B cell (primary cell): ENCODE measurements at regions of chr17 and their contacts with region 1.

Region 1: GRCh38 chr17:8057691-8058114 is 18.8 kb downstream of the ALOX15B start:
- DNase-seq: peak; percentile 87
- ATAC-seq: peak; percentile 85
- H3K4me3 ChIP-seq: no peak overlapping the region
- H3K4me3 Mint-ChIP-seq: no peak overlapping the region
- H3K27ac ChIP-seq: no peak overlapping the region
- H3K27ac Mint-ChIP-seq: no peak overlapping the region
- H3K4me1 ChIP-seq: peaks cover 22 to 25% of the 10 kb centered on the region in 2 donors
- H3K4me1 Mint-ChIP-seq: peaks cover 29% of the 10 kb centered on the region
- H3K27me3 ChIP-seq: peaks cover 0 to 24% (median 9%) of the 10 kb centered on the region in 4 experiments
- H3K27me3 Mint-ChIP-seq: peaks cover 31% of the 10 kb centered on the region
- CTCF ChIP-seq: peak; percentile 86

Region 2: GRCh38 chr17:7745748-7746470 is 311.8 kb before region 1 on chr17:
- CTCF ChIA-PET with region 1: interaction called, 32 read pairs
- POLR2A ChIA-PET with region 1: no interaction called
- intact Hi-C with region 1: loop called (anchors 1 kb)
- DNase-seq: no peak
- ATAC-seq: no peak
- H3K4me3 ChIP-seq: no peak overlapping the region
- H3K4me3 Mint-ChIP-seq: no peak overlapping the region
- H3K27ac ChIP-seq: no peak overlapping the region
- H3K27ac Mint-ChIP-seq: no peak overlapping the region
- H3K4me1 ChIP-seq: no peaks in the 10 kb centered on the region
- H3K4me1 Mint-ChIP-seq: no peaks in the 10 kb centered on the region
- H3K27me3 ChIP-seq: no peaks in the 10 kb centered on the region
- H3K27me3 Mint-ChIP-seq: peaks cover 25% of the 10 kb centered on the region
- CTCF ChIP-seq: no peak

Region 3: DNA sequence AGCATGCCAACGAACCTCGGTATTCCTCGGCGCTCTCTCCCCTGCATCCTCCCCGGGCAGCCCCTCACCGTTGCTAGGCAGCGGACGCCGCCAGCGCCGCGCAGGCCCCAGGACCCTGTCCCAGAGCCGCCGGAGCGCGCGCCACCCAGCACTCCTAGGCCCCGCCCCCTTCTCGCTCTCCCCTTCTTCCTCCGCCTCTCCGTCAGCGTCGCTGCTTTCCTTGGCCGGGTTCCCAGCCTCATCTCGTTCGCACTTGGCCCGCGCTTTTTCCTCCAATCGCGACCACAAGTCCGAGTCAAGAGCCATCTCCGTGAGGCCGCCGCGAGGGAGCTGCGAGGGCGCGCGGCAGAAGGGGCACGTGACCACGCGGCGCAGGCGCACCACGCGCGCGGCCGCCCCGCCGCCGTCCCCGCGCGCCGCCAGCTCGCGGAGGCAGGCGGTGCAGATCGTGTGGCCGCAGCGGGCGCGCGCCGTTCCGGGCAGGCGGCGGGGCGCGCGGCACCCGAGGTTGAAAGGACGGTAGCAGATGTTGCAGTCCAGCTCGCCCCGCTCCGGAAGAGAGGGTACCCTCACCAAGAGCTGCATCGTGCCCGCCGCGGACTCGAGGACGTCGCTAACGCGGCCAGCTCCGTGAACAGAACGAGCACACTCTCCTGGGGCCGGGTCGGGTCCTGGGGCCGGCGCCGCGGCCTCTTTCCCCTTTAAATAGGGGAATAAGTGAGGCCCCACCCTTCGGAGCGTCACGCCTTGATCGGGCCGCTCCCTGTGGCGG is 141.9 kb before region 1 on chr17 and contains the start of gene RNF227:
- CTCF ChIA-PET with region 1: interaction called, 75 read pairs
- POLR2A ChIA-PET with region 1: no interaction called
- intact Hi-C with region 1: loop called (anchors 1 kb)
- DNase-seq: peak; percentile 93
- ATAC-seq: peak; percentile 82
- H3K4me3 ChIP-seq: peak within 1 kb of the TSS; percentile 9 to 81 (median 76)
- H3K4me3 Mint-ChIP-seq: peak within 1 kb of the TSS; percentile 93
- H3K27ac ChIP-seq: peak within 1 kb of the TSS; percentile 69 to 75
- H3K27ac Mint-ChIP-seq: peak within 1 kb of the TSS; percentile 93
- H3K4me1 ChIP-seq: peaks cover 16 to 20% of the 10 kb centered on the region in 2 donors
- H3K4me1 Mint-ChIP-seq: peaks cover 24% of the 10 kb centered on the region
- H3K27me3 ChIP-seq: no peaks in the 10 kb centered on the region
- H3K27me3 Mint-ChIP-seq: no peaks in the 10 kb centered on the region
- CTCF ChIP-seq: no peak
- total RNA-seq, gene RNF227: 3.8 and 4.3 TPM in 2 replicates

Region 4: GRCh38 chr17:8041249-8041928 is 16.3 kb before region 1 on chr17:
- CTCF ChIA-PET with region 1: interaction called, 26 read pairs
- POLR2A ChIA-PET with region 1: no interaction called
- intact Hi-C with region 1: loop called (anchors 1 kb)
- DNase-seq: peak; percentile 64
- ATAC-seq: no peak
- H3K4me3 ChIP-seq: no peak overlapping the region
- H3K4me3 Mint-ChIP-seq: no peak overlapping the region
- H3K27ac ChIP-seq: no peak overlapping the region
- H3K27ac Mint-ChIP-seq: no peak overlapping the region
- H3K4me1 ChIP-seq: peaks cover 5 to 8% of the 10 kb centered on the region in 2 donors
- H3K4me1 Mint-ChIP-seq: peaks cover 3% of the 10 kb centered on the region
- H3K27me3 ChIP-seq: peaks cover 0 to 14% (median 7%) of the 10 kb centered on the region in 4 experiments
- H3K27me3 Mint-ChIP-seq: peaks cover 42% of the 10 kb centered on the region
- CTCF ChIP-seq: peak; percentile 56

Region 5: GRCh38 chr17:8118769-8119580 is 61.3 kb after region 1 on chr17:
- CTCF ChIA-PET with region 1: interaction called, 40 read pairs
- POLR2A ChIA-PET with region 1: no interaction called
- intact Hi-C with region 1: no loop called
- DNase-seq: peak; percentile 92
- ATAC-seq: peak; percentile 68
- H3K4me3 ChIP-seq: peak overlapping the region; percentile 61 to 85 (median 69)
- H3K4me3 Mint-ChIP-seq: peak overlapping the region; percentile 94
- H3K27ac ChIP-seq: peak overlapping the region; percentile 13 to 34
- H3K27ac Mint-ChIP-seq: peak overlapping the region; percentile 98
- H3K4me1 ChIP-seq: peaks cover 53 to 61% of the 10 kb centered on the region in 2 donors
- H3K4me1 Mint-ChIP-seq: peaks cover 56% of the 10 kb centered on the region
- H3K27me3 ChIP-seq: peaks cover 0 to 73% (median 49%) of the 10 kb centered on the region in 4 experiments
- H3K27me3 Mint-ChIP-seq: peaks cover 57% of the 10 kb centered on the region
- CTCF ChIP-seq: peak; percentile 92

Region 6: GRCh38 chr17:8745586-8746500 is 688.1 kb after region 1 on chr17:
- CTCF ChIA-PET with region 1: interaction called, 20 read pairs
- POLR2A ChIA-PET with region 1: no interaction called
- intact Hi-C with region 1: loop called (anchors 2 kb)
- DNase-seq: peak; percentile 88
- ATAC-seq: peak; percentile 86
- H3K4me3 ChIP-seq: peak overlapping the region; percentile 59 to 75 (median 72)
- H3K4me3 Mint-ChIP-seq: peak overlapping the region; percentile 93
- H3K27ac ChIP-seq: peak overlapping the region; percentile 50 to 68
- H3K27ac Mint-ChIP-seq: peak overlapping the region; percentile 93
- H3K4me1 ChIP-seq: peaks cover 7 to 23% of the 10 kb centered on the region in 2 donors
- H3K4me1 Mint-ChIP-seq: peaks cover 20% of the 10 kb centered on the region
- H3K27me3 ChIP-seq: no peaks in the 10 kb centered on the region
- H3K27me3 Mint-ChIP-seq: peaks cover 9% of the 10 kb centered on the region
- CTCF ChIP-seq: peak; percentile 98